Activated CD8-positive, alpha-beta T cell treated with anti-CD3 and anti-CD28 coated beads, Interleukin-2, amount 10 ng/mL, durations not matched to agents 7 days and 5 days (primary cell): ENCODE measurements at regions of chr19 and their contacts with region 1.

Region 1: GRCh38 chr19:6516659-6517291 is 14.1 kb upstream of the TNFSF9 start:
- DNase-seq: peak; percentile 94
- ATAC-seq: peak; percentile 87
- H3K4me3 Mint-ChIP-seq: peak overlapping the region; percentile 93
- H3K27ac Mint-ChIP-seq: peak overlapping the region; percentile 93
- H3K4me1 Mint-ChIP-seq: peaks cover 32% of the 10 kb centered on the region
- H3K27me3 Mint-ChIP-seq: no peaks in the 10 kb centered on the region

Region 2: GRCh38 chr19:6393074-6393983 is 123.4 kb before region 1 on chr19 and contains the start of gene GTF2F1:
- CTCF ChIA-PET with region 1: no interaction called
- POLR2A ChIA-PET with region 1: no interaction called
- DNase-seq: peak; percentile 96
- ATAC-seq: peak; percentile 82
- H3K4me3 Mint-ChIP-seq: peak within 1 kb of the TSS; percentile 96
- H3K27ac Mint-ChIP-seq: peak within 1 kb of the TSS; percentile 96
- H3K4me1 Mint-ChIP-seq: peaks cover 28% of the 10 kb centered on the region
- H3K27me3 Mint-ChIP-seq: no peaks in the 10 kb centered on the region
- total RNA-seq, gene GTF2F1: 71.2 to 71.5 TPM

Region 3: DNA sequence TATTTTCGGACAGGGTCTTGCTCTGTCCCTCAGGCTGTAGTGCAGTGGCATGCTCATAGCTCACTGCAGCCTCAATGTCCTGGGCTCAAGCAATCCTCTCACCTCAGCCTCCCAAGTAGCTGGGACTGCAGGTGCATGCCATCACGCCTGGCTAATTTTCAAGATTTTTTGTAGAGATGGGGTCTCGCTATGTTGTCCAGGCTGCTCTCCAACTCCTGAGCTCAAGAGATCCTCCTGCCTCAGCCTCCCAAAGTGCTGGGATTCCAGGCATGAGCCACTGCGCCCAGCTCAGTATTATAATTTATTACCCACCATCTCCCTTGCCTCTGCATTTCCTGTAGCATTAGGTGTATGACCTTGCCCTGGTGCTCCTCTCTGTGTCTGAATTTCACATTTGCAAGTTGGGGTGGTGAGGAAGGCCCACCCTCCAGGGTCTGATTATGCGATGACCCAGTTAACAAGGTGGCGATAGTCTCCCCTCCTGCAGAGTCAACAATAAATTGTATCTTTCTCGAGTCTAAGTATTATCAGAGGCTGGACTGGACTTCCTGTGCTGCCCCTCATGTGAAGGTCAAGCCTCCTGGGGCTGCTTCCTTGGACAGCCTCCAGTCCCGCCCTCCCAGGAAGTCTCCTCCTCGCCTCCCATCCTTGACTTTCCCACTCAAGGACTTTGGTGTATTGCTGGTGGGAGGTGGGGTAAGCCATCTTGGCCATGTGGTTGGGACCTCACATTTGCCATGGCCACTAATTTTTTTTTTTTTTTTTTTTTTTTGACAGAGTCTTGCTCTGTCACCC is 13.2 kb before region 1 on chr19:
- CTCF ChIA-PET with region 1: interaction called, 12 read pairs
- POLR2A ChIA-PET with region 1: interaction called, 3 read pairs
- DNase-seq: no peak
- ATAC-seq: no peak
- H3K4me3 Mint-ChIP-seq: no peak overlapping the region
- H3K27ac Mint-ChIP-seq: no peak overlapping the region
- H3K4me1 Mint-ChIP-seq: peaks cover 29% of the 10 kb centered on the region
- H3K27me3 Mint-ChIP-seq: peaks cover 6% of the 10 kb centered on the region

Region 4: GRCh38 chr19:6551607-6552450 is 35.1 kb after region 1 on chr19:
- CTCF ChIA-PET with region 1: interaction called, 19 read pairs
- POLR2A ChIA-PET with region 1: no interaction called
- DNase-seq: peak; percentile 87
- ATAC-seq: peak; percentile 98
- H3K4me3 Mint-ChIP-seq: peak overlapping the region; percentile 28
- H3K27ac Mint-ChIP-seq: peak overlapping the region; percentile 52
- H3K4me1 Mint-ChIP-seq: peaks cover 28% of the 10 kb centered on the region
- H3K27me3 Mint-ChIP-seq: no peaks in the 10 kb centered on the region

Region 5: GRCh38 chr19:6767357-6768235 is 250.8 kb after region 1 on chr19 and contains the start of gene SH2D3A:
- CTCF ChIA-PET with region 1: interaction called, 11 read pairs
- POLR2A ChIA-PET with region 1: no interaction called
- DNase-seq: peak; percentile 97
- ATAC-seq: peak; percentile 79
- H3K4me3 Mint-ChIP-seq: peak within 1 kb of the TSS; percentile 88
- H3K27ac Mint-ChIP-seq: peak within 1 kb of the TSS; percentile 91
- H3K4me1 Mint-ChIP-seq: peaks cover 60% of the 10 kb centered on the region
- H3K27me3 Mint-ChIP-seq: no peaks in the 10 kb centered on the region
- total RNA-seq, gene SH2D3A: 28.2 to 28.5 TPM